Activated CD4-positive, alpha-beta memory T cell treated with anti-CD3 and anti-CD28 coated beads, Interleukin-2, amount 10 ng/mL, durations not matched to agents 7 days and 5 days (primary cell): ENCODE measurements at regions of chr2 and their contacts with region 1.

Region 1: GRCh38 chr2:152730591-152731303 is 12.3 kb downstream of the ARL6IP6 start:
- DNase-seq: peak; percentile 65
- H3K4me3 Mint-ChIP-seq: no peak overlapping the region
- H3K27ac Mint-ChIP-seq: peak overlapping the region; percentile 65
- H3K4me1 Mint-ChIP-seq: peaks cover 31% of the 10 kb centered on the region
- H3K27me3 Mint-ChIP-seq: no peaks in the 10 kb centered on the region

Region 2: GRCh38 chr2:152706477-152707020 is 24.2 kb before region 1 on chr2:
- CTCF ChIA-PET with region 1: no interaction called
- POLR2A ChIA-PET with region 1: no interaction called
- DNase-seq: no peak
- H3K4me3 Mint-ChIP-seq: no peak overlapping the region
- H3K27ac Mint-ChIP-seq: no peak overlapping the region
- H3K4me1 Mint-ChIP-seq: peaks cover 21% of the 10 kb centered on the region
- H3K27me3 Mint-ChIP-seq: no peaks in the 10 kb centered on the region

Region 3: DNA sequence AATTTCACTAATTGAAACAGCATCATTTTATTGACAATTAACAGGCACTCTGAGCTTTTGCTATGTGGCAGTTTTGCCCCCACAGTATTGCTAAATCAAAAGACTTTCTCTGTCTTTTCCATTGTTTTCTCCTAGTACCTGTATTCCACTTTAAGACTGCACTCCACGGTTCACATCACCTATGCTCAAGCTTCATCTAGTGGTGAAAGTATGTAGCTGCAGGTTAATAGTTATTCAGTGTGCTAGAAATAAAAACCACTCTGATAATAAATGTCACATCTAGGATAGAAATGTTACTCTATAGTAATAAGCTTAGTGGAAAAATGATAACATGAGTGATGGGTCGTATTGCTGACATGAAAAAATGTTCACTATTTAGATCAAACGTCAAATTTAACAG is 12.3 kb after region 1 on chr2:
- CTCF ChIA-PET with region 1: interaction called, 15 read pairs
- POLR2A ChIA-PET with region 1: no interaction called
- DNase-seq: no peak
- H3K4me3 Mint-ChIP-seq: no peak overlapping the region
- H3K27ac Mint-ChIP-seq: no peak overlapping the region
- H3K4me1 Mint-ChIP-seq: no peaks in the 10 kb centered on the region
- H3K27me3 Mint-ChIP-seq: no peaks in the 10 kb centered on the region

Region 4: DNA sequence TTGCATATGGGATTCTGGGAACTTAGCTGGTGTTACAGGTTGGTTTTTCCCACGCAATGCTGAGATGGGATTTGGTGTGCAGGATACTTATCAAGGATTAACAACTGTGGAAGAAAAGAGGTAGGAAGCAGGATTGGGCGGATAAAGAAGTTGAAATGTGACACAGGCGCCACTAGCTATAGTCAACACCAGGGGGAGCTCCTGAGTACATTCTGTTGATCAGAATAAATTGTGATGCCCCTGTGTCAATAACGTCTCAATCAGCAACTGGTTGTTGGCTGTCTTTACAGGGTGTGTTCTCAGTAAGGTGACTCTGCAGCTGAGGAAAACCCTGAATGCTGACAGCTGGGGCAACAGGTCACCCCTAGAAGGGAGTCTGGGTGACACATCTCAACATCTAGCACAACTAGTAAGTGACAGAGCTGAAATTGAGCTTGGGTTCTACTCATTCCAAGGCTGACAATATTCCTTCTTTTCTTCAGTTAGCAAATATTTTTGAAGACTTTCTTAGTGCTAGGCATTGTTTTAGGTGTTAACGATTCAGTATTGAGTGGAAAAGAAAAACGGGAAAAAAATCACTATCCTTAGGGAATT is 130.7 kb after region 1 on chr2:
- CTCF ChIA-PET with region 1: no interaction called
- POLR2A ChIA-PET with region 1: no interaction called
- DNase-seq: no peak
- H3K4me3 Mint-ChIP-seq: no peak overlapping the region
- H3K27ac Mint-ChIP-seq: no peak overlapping the region
- H3K4me1 Mint-ChIP-seq: no peaks in the 10 kb centered on the region
- H3K27me3 Mint-ChIP-seq: no peaks in the 10 kb centered on the region

Region 5: DNA sequence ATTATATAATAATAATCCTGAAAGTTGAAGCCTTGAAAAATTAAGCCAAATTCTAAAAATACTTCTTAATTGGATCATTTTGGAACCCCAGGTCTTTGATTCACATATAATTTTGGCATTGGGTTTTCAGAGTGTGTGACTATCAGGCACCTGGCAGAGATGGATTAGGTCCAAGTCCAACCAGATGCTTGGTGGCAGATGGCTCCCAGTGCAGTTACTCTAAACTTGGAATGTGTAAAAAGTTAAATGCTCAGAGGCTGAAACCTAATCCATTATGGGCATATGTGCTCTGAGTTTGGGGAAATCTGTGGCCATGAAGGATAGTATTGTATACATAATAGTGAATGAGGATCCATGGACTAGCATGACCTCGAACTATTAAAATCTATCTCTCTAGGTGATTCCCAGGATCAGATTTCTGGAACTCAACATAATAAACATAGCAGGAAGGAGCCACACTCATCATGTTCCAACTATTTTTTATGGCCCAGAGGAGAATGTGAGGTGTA is 414.8 kb after region 1 on chr2:
- CTCF ChIA-PET with region 1: no interaction called
- POLR2A ChIA-PET with region 1: no interaction called
- DNase-seq: no peak
- H3K4me3 Mint-ChIP-seq: no peak overlapping the region
- H3K27ac Mint-ChIP-seq: no peak overlapping the region
- H3K4me1 Mint-ChIP-seq: no peaks in the 10 kb centered on the region
- H3K27me3 Mint-ChIP-seq: no peaks in the 10 kb centered on the region